ENCODE measurements at regions of chr20 and their contacts with region 1.

Region 1: DNA sequence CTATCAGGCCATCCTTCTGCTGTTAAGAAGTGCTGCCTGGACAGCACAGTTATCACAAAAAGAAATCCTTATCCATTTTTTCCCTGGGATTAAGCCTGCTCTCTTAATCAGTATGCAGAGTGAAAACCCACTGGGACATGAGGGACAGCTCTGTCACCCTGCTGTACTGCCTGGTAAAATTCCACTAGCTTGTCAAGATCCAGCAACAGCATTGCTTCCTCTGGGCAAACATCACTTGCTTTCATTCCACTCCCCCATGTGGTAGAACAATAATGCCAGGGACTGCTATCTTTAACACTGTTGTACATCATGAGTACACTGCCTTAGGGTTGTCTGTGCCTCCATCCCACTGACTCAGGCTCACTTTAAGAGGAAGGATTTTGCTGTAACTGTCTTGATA is 331.3 kb downstream of the KIF16B start:
- DNase-seq: peak in 2 of 10 donors; percentile 47 to 67
- H3K4me3 ChIP-seq: no peak overlapping the region
- H3K27ac ChIP-seq: peak overlapping the region in 52 of 59 donors; percentile 1 to 87 (median 60)
- H3K27me3 ChIP-seq: no peaks in the 10 kb centered on the region
- CTCF ChIP-seq: peak in 18 of 56 donors; percentile 6 to 34 (median 18)

Region 2: GRCh38 chr20:16158090-16158975 is 83.6 kb before region 1 on chr20:
- intact Hi-C with region 1: loop called in 1 of 2 experiments (anchors 5 kb)
- DNase-seq: peak in 8 of 10 donors; percentile 5 to 67 (median 53)
- H3K4me3 ChIP-seq: no peak overlapping the region
- H3K27ac ChIP-seq: peak overlapping the region in 13 of 59 donors; percentile 3 to 69 (median 56)
- H3K27me3 ChIP-seq: no peaks in the 10 kb centered on the region
- CTCF ChIP-seq: no peak